CD4-positive, alpha-beta T cell (primary cell): ENCODE measurements at regions of chr16 and their contacts with region 1.

Region 1: GRCh38 chr16:29790183-29790952 is at the start of gene KIF22:
- DNase-seq: peak; percentile 99 to 100 (median 100)
- ATAC-seq: peak; percentile 90
- H3K4me3 ChIP-seq: peak within 1 kb of the TSS; percentile 93
- H3K4me3 Mint-ChIP-seq: peak within 1 kb of the TSS; percentile 96
- H3K27ac ChIP-seq: peak within 1 kb of the TSS; percentile 82 to 83
- H3K27ac Mint-ChIP-seq: peak within 1 kb of the TSS; percentile 97
- H3K4me1 ChIP-seq: peaks cover 43% of the 10 kb centered on the region
- H3K4me1 Mint-ChIP-seq: peaks cover 51% of the 10 kb centered on the region
- H3K27me3 ChIP-seq: no peaks in the 10 kb centered on the region
- H3K27me3 Mint-ChIP-seq: no peaks in the 10 kb centered on the region
- CTCF ChIP-seq: peak; percentile 80
- total RNA-seq, gene KIF22: 99.0 to 101 TPM

Region 2: DNA sequence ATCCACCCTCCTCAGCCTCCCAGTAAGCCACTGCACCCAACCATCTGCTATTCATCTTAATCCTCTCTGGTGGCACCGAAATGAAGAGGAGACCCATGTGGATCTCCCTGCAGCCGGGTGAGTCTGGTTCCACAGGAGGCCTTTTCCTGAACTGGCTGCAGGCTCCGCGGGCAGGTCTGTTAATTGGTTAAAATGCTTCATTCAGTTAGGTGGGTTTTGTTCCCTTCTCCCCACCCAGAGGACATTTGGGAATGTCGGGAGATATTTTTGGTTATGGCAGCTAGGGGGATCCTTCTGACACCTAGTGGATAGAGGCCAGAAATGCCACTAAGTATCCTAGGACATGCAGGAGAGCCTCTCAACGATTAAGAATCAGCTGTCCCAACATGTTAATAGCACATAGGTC is 61.2 kb before region 1 on chr16:
- CTCF ChIA-PET with region 1: interaction called, 20 read pairs
- POLR2A ChIA-PET with region 1: interaction called, 8 read pairs
- intact Hi-C with region 1: loop called in 1 of 2 experiments (anchors 5 kb)
- DNase-seq: peak in 2 of 14 experiments; percentile 31 to 36
- ATAC-seq: no peak
- H3K4me3 ChIP-seq: no peak overlapping the region
- H3K4me3 Mint-ChIP-seq: no peak overlapping the region
- H3K27ac ChIP-seq: no peak overlapping the region
- H3K27ac Mint-ChIP-seq: no peak overlapping the region
- H3K4me1 ChIP-seq: peaks cover 28% of the 10 kb centered on the region
- H3K4me1 Mint-ChIP-seq: peaks cover 28% of the 10 kb centered on the region
- H3K27me3 ChIP-seq: no peaks in the 10 kb centered on the region
- H3K27me3 Mint-ChIP-seq: no peaks in the 10 kb centered on the region
- CTCF ChIP-seq: peak; percentile 58

Region 3: GRCh38 chr16:29757950-29758466 is 32.4 kb before region 1 on chr16:
- CTCF ChIA-PET with region 1: interaction called, 19 read pairs
- POLR2A ChIA-PET with region 1: interaction called, 17 read pairs
- intact Hi-C with region 1: no loop called
- DNase-seq: no peak
- ATAC-seq: no peak
- H3K4me3 ChIP-seq: no peak overlapping the region
- H3K4me3 Mint-ChIP-seq: no peak overlapping the region
- H3K27ac ChIP-seq: no peak overlapping the region
- H3K27ac Mint-ChIP-seq: peak overlapping the region; percentile 80
- H3K4me1 ChIP-seq: peaks cover 49% of the 10 kb centered on the region
- H3K4me1 Mint-ChIP-seq: peaks cover 47% of the 10 kb centered on the region
- H3K27me3 ChIP-seq: no peaks in the 10 kb centered on the region
- H3K27me3 Mint-ChIP-seq: no peaks in the 10 kb centered on the region
- CTCF ChIP-seq: no peak

Region 4: GRCh38 chr16:29815793-29816693 is 25.7 kb after region 1 on chr16 and contains the start of gene PAGR1:
- CTCF ChIA-PET with region 1: interaction called, 27 read pairs
- POLR2A ChIA-PET with region 1: interaction called, 46 read pairs
- intact Hi-C with region 1: loop called in 1 of 2 experiments (anchors 1 kb)
- DNase-seq: peak; percentile 97 to 100 (median 98)
- ATAC-seq: peak; percentile 73
- H3K4me3 ChIP-seq: peak within 1 kb of the TSS; percentile 95
- H3K4me3 Mint-ChIP-seq: peak within 1 kb of the TSS; percentile 97
- H3K27ac ChIP-seq: peak within 1 kb of the TSS; percentile 84 to 94
- H3K27ac Mint-ChIP-seq: peak within 1 kb of the TSS; percentile 90
- H3K4me1 ChIP-seq: peaks cover 92% of the 10 kb centered on the region
- H3K4me1 Mint-ChIP-seq: peaks cover 83% of the 10 kb centered on the region
- H3K27me3 ChIP-seq: no peaks in the 10 kb centered on the region
- H3K27me3 Mint-ChIP-seq: no peaks in the 10 kb centered on the region
- CTCF ChIP-seq: peak; percentile 97
- total RNA-seq, gene PAGR1: 20.3 TPM